ENCODE measurements at regions of chr6 and their contacts with region 1.

Region 1: GRCh38 chr6:2756687-2757224 is 6.0 kb upstream of the MYLK4 start:
- DNase-seq: no peak
- ATAC-seq: no peak
- H3K4me3 Mint-ChIP-seq: no peak overlapping the region
- H3K27ac Mint-ChIP-seq: no peak overlapping the region
- H3K4me1 Mint-ChIP-seq: peaks cover 11% of the 10 kb centered on the region
- H3K27me3 Mint-ChIP-seq: peaks cover 7% of the 10 kb centered on the region
- CTCF ChIP-seq: no peak

Region 2: DNA sequence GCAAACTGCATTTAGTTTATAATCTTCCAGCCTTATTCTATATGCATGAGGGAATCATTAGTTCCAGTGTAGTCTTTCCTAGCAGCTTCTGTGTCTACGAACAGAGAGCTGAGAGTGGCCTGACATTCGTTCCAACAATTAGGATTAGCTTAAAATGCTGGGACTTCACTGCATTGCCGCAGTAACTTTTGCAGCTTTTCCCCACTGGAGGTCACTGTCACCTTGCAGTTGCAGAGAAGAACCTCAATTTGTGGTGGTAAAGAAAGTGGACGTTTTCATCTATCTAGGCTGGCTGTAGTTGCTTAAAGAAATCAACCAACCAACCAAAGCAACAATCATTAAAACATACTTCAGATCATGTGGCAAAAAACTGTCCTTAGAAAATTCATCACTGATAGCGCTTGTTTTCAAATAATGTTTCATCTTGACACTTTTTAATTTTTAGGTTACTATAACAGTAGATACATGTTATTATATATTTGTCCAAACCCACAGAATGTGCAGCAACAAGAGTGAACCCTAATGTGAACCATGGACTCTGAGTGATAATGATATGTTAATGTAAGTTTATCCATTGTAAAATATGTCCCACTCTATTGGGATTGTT is 18.3 kb before region 1 on chr6:
- CTCF ChIA-PET with region 1: interaction called, 50 read pairs
- POLR2A ChIA-PET with region 1: no interaction called
- intact Hi-C with region 1: loop called (anchors 2 kb)
- DNase-seq: no peak
- ATAC-seq: no peak
- H3K4me3 Mint-ChIP-seq: no peak overlapping the region
- H3K27ac Mint-ChIP-seq: no peak overlapping the region
- H3K4me1 Mint-ChIP-seq: peaks cover 10% of the 10 kb centered on the region
- H3K27me3 Mint-ChIP-seq: no peaks in the 10 kb centered on the region
- CTCF ChIP-seq: no peak